ENCODE measurements at regions of chr16 and their contacts with region 1.

Region 1: DNA sequence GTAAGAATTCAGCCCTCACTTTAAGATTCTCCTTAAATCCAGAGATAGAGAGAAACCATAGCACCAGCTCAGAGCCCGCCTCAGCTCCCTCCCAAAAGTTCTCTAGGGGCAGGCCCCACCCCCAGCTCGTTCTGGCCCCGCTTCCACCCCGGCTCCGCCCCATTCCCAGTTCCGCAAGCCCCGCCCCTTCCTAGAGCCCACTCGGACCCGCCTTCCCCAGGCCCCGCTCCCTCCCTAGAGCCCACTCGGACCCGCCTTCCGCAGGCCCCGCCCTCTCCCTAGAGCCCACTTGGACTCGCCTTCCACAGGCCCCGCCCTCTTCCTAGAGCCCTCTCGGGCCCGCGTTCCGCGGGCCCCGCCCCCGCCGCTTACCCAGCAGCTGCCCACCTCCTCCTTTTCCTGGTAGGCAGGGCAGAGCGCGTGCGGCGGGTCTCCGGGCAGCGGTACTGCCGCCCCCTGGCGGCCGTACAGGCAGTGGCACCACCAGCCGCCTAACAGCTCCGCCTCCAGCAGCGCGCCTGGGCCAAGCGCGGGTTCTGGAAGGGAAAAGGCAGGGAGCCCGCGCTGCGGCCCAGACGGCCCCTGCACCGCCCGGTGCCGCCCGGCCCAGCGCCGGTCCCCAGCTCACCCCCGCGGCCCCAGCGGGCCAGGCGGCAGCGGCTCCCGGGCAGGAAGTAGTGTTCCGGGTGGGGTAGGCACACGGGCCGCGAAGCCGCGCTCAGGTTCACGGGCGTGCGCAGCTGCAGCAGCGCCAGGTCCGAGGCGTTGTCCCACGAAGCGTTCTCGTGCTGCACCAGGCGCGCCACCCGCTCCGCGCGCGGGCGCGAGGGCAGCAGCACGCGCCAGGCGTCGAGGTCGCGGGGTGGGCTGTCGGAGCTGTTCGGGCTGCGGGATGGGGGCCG is 6.8 kb upstream of the PRSS8 start:
- DNase-seq: peak; percentile 89
- ATAC-seq: peak; percentile 95
- H3K4me3 ChIP-seq: peak overlapping the region; percentile 63; the same call in 1 of the 2 replicates
- H3K27ac ChIP-seq: peak overlapping the region; percentile 55
- H3K4me1 ChIP-seq: peaks cover 9% of the 10 kb centered on the region
- H3K27me3 ChIP-seq: no peaks in the 10 kb centered on the region
- CTCF ChIP-seq: peak; percentile 87 to 97 (median 95)
- EP300 ChIP-seq: no peak
- POLR2A ChIP-seq: peak; percentile 36; the same call in 1 of the 2 replicates
- RAD21 ChIP-seq: peak; percentile 63

Region 2: GRCh38 chr16:30984669-30985400 is 157.5 kb before region 1 on chr16 and contains the start of gene HSD3B7:
- CTCF ChIA-PET with region 1: interaction called, 17 read pairs
- POLR2A ChIA-PET with region 1: no interaction called
- RAD21 ChIA-PET with region 1: interaction called, 25 read pairs
- SMC1A ChIA-PET with region 1: interaction called, 10 read pairs
- in situ Hi-C with region 1: no loop called
- intact Hi-C with region 1: no loop called
- DNase-seq: no peak
- ATAC-seq: peak; percentile 95
- H3K4me3 ChIP-seq: no peak within 1 kb of the TSS
- H3K27ac ChIP-seq: no peak within 1 kb of the TSS
- H3K4me1 ChIP-seq: no peaks in the 10 kb centered on the region
- H3K27me3 ChIP-seq: no peaks in the 10 kb centered on the region
- CTCF ChIP-seq: peak; percentile 85 to 97 (median 92)
- EP300 ChIP-seq: no peak
- POLR2A ChIP-seq: peak; percentile 55
- RAD21 ChIP-seq: peak; percentile 89
- polyA plus RNA-seq, gene HSD3B7: 0.18 to 0.40 TPM

Region 3: GRCh38 chr16:31073968-31074813 is 68.2 kb before region 1 on chr16 and contains the starts of genes ZNF646 and ZNF668:
- CTCF ChIA-PET with region 1: interaction called, 15 read pairs
- POLR2A ChIA-PET with region 1: interaction called, 16 read pairs
- RAD21 ChIA-PET with region 1: interaction called, 16 read pairs
- SMC1A ChIA-PET with region 1: interaction called, 6 read pairs
- in situ Hi-C with region 1: no loop called
- intact Hi-C with region 1: loop called (anchors 5 kb)
- DNase-seq: peak; percentile 96
- ATAC-seq: peak; percentile 84
- H3K4me3 ChIP-seq: peak within 1 kb of the TSS; percentile 86
- H3K27ac ChIP-seq: peak within 1 kb of the TSS; percentile 89
- H3K4me1 ChIP-seq: peaks cover 3% of the 10 kb centered on the region; the same call in 1 of the 2 replicates
- H3K27me3 ChIP-seq: no peaks in the 10 kb centered on the region
- CTCF ChIP-seq: no peak
- EP300 ChIP-seq: no peak
- POLR2A ChIP-seq: peak; percentile 87
- RAD21 ChIP-seq: no peak
- polyA plus RNA-seq, gene ZNF646: 0.10 to 0.26 TPM
- polyA plus RNA-seq, gene ZNF668: 0.05 TPM in 1 of 2 experiments, not detected in the other

Region 4: DNA sequence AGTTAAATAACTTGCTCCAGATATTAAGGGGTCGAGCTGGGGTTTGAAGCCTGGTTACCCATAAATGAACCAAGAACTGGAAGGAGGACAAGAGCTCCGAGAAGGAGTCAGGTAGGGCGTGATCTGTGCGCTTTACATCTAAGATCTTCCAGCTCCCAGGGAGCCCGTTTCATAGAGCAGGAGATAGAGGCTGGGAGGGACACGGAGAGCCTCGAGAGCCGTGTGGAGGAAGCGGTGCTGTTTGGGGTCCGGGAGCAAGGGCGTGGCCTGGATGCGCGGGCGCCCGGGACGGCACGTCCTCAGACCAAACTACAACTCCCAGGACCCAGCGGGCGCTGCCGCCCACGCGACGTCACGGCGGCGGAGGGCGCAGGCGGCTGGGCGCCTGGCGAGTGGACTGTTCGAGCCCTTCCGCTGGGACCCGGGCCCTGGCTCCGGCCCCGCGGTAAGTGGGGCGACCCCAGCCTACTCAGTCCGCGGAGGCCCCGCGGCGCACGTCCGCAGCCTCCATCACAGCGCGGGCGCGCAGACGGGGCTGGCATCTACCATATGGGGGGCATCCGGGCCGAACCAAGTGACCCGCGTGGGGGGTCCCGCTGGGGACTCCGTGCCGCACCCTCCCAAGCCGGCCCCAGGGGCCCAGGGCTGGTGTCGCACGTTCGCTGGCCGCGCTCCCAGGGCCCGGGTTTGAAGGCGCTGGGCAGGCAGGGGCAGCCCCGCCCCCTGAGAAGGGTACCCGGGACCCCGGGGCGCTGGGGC is 34.1 kb before region 1 on chr16 and contains the start of gene BCKDK:
- CTCF ChIA-PET with region 1: interaction called, 7 read pairs
- POLR2A ChIA-PET with region 1: interaction called, 13 read pairs
- RAD21 ChIA-PET with region 1: interaction called, 6 read pairs
- SMC1A ChIA-PET with region 1: no interaction called
- in situ Hi-C with region 1: no loop called
- intact Hi-C with region 1: loop called (anchors 5 kb)
- DNase-seq: peak; percentile 32
- ATAC-seq: peak; percentile 96
- H3K4me3 ChIP-seq: peak within 1 kb of the TSS; percentile 74
- H3K27ac ChIP-seq: peak within 1 kb of the TSS; percentile 81
- H3K4me1 ChIP-seq: peaks cover 22% of the 10 kb centered on the region
- H3K27me3 ChIP-seq: no peaks in the 10 kb centered on the region
- CTCF ChIP-seq: no peak
- EP300 ChIP-seq: no peak
- POLR2A ChIP-seq: peak; percentile 66
- RAD21 ChIP-seq: no peak
- polyA plus RNA-seq, gene BCKDK: 0.68 to 3.3 TPM

Region 5: GRCh38 chr16:31157136-31157535 is 14.8 kb after region 1 on chr16:
- CTCF ChIA-PET with region 1: interaction called, 19 read pairs
- POLR2A ChIA-PET with region 1: interaction called, 3 read pairs
- RAD21 ChIA-PET with region 1: interaction called, 11 read pairs
- SMC1A ChIA-PET with region 1: interaction called, 7 read pairs
- in situ Hi-C with region 1: no loop called
- intact Hi-C with region 1: no loop called
- DNase-seq: no peak
- ATAC-seq: peak; percentile 73
- H3K4me3 ChIP-seq: no peak overlapping the region
- H3K27ac ChIP-seq: no peak overlapping the region
- H3K4me1 ChIP-seq: no peaks in the 10 kb centered on the region
- H3K27me3 ChIP-seq: no peaks in the 10 kb centered on the region
- CTCF ChIP-seq: no peak
- EP300 ChIP-seq: no peak
- POLR2A ChIP-seq: no peak
- RAD21 ChIP-seq: no peak

Region 6: GRCh38 chr16:31202414-31203375 is 60.3 kb after region 1 on chr16 and contains the start of gene PYCARD:
- CTCF ChIA-PET with region 1: interaction called, 12 read pairs
- POLR2A ChIA-PET with region 1: interaction called, 8 read pairs
- RAD21 ChIA-PET with region 1: interaction called, 9 read pairs
- SMC1A ChIA-PET with region 1: interaction called, 5 read pairs
- in situ Hi-C with region 1: no loop called
- intact Hi-C with region 1: no loop called
- DNase-seq: no peak
- ATAC-seq: peak; percentile 51
- H3K4me3 ChIP-seq: peak within 1 kb of the TSS; percentile 86
- H3K27ac ChIP-seq: peak within 1 kb of the TSS; percentile 76
- H3K4me1 ChIP-seq: peaks cover 24% of the 10 kb centered on the region
- H3K27me3 ChIP-seq: no peaks in the 10 kb centered on the region
- CTCF ChIP-seq: no peak
- EP300 ChIP-seq: no peak
- POLR2A ChIP-seq: peak; percentile 76
- RAD21 ChIP-seq: no peak
- polyA plus RNA-seq, gene PYCARD: 5.1 to 14.9 TPM

Measured in GM12878 (cell line).